K562 (cell line): ENCODE measurements at regions of chr7 and their contacts with region 1.

Region 1: DNA sequence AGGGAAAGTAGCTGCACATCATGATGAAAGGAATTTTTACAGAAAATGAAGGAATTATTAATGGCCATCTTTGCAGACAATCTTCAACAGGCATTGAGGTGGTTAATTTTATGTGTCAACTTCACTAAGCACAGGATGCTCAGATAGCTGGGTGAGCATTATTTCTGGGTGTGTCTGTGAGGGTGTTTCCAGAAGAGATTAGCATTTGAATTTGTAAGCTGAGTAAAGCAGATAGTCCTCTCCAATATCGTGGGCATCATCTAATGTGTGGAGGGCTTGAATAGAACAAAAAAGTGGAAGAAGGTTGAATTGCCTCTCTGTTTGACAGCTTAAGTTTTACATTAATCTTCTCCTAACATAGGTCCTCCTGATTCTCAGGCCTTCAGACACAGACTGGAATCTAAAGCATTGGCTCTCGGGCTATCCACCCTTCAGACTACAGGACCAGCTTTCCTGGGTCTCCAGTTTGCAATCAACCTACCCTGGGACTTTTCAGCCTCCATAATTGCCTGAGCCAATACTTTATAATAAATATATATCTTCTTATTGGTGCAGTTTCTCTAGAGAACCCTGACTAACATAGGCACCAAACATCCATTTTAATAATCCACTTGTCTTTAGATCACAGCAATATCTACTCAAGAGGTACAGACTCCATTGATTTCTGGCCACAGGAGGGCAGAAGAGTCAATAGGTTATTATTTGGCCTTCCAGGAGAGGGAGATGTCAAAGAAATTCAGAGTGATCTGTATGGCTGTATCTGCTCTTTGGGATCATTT is 10.5 kb upstream of the CRPPA start:
- DNase-seq: peak; percentile 36 to 77 (median 50)
- ATAC-seq: peak; percentile 92
- H3K4me3 ChIP-seq: no peak overlapping the region
- H3K27ac ChIP-seq: no peak overlapping the region
- H3K4me1 ChIP-seq: peaks cover 0 to 37% of the 10 kb centered on the region in 2 experiments; a peak in 4 of 5 replicates
- H3K27me3 ChIP-seq: no peaks in the 10 kb centered on the region
- CTCF ChIP-seq: peak; percentile 71 to 96 (median 89)
- EP300 ChIP-seq: no peak; the same call in 1 of the 2 replicates
- POLR2A ChIP-seq: no peak
- RAD21 ChIP-seq: peak; percentile 84 to 92

Region 2: GRCh38 chr7:16078076-16078952 is 353.5 kb before region 1 on chr7:
- CTCF ChIA-PET with region 1: no interaction called
- POLR2A ChIA-PET with region 1: no interaction called
- in situ Hi-C with region 1: no loop called
- intact Hi-C with region 1: loop called (anchors 1 kb)
- DNase-seq: peak; percentile 35 to 83 (median 40)
- ATAC-seq: peak; percentile 94
- H3K4me3 ChIP-seq: no peak overlapping the region
- H3K27ac ChIP-seq: no peak overlapping the region
- H3K4me1 ChIP-seq: no peaks in the 10 kb centered on the region; a peak in 1 of 5 replicates
- H3K27me3 ChIP-seq: no peaks in the 10 kb centered on the region
- CTCF ChIP-seq: peak; percentile 60 to 77 (median 74); a peak in 5 of 6 replicates
- EP300 ChIP-seq: no peak
- POLR2A ChIP-seq: no peak
- RAD21 ChIP-seq: peak; percentile 92 to 95

Region 3: GRCh38 chr7:16114633-16115032 is 317.2 kb before region 1 on chr7:
- CTCF ChIA-PET with region 1: no interaction called
- POLR2A ChIA-PET with region 1: no interaction called
- in situ Hi-C with region 1: no loop called
- intact Hi-C with region 1: loop called (anchors 2 kb)
- DNase-seq: peak in 2 of 4 experiments; percentile 23 to 58
- ATAC-seq: peak; percentile 83
- H3K4me3 ChIP-seq: no peak overlapping the region
- H3K27ac ChIP-seq: no peak overlapping the region; the same call in 2 of the 3 replicates
- H3K4me1 ChIP-seq: no peaks in the 10 kb centered on the region
- H3K27me3 ChIP-seq: no peaks in the 10 kb centered on the region
- CTCF ChIP-seq: peak in 2 of 3 experiments; percentile 42 to 60; a peak in 3 of 6 replicates
- EP300 ChIP-seq: no peak
- POLR2A ChIP-seq: no peak
- RAD21 ChIP-seq: peak; percentile 51 to 78

Region 4: GRCh38 chr7:16420649-16421332 is 11.0 kb before region 1 on chr7:
- CTCF ChIA-PET with region 1: no interaction called
- POLR2A ChIA-PET with region 1: interaction called, 24 read pairs
- in situ Hi-C with region 1: no loop called
- intact Hi-C with region 1: no loop called
- DNase-seq: peak; percentile 85 to 97 (median 90)
- ATAC-seq: peak; percentile 87
- H3K4me3 ChIP-seq: peak overlapping the region; percentile 66
- H3K27ac ChIP-seq: peak overlapping the region; percentile 97
- H3K4me1 ChIP-seq: peaks cover 23 to 46% of the 10 kb centered on the region in 2 experiments
- H3K27me3 ChIP-seq: no peaks in the 10 kb centered on the region
- CTCF ChIP-seq: peak; percentile 29 to 73 (median 36); a peak in 5 of 6 replicates
- EP300 ChIP-seq: no peak
- POLR2A ChIP-seq: peak; percentile 96
- RAD21 ChIP-seq: peak; percentile 30 to 32; a peak in 3 of 4 replicates

Region 5: DNA sequence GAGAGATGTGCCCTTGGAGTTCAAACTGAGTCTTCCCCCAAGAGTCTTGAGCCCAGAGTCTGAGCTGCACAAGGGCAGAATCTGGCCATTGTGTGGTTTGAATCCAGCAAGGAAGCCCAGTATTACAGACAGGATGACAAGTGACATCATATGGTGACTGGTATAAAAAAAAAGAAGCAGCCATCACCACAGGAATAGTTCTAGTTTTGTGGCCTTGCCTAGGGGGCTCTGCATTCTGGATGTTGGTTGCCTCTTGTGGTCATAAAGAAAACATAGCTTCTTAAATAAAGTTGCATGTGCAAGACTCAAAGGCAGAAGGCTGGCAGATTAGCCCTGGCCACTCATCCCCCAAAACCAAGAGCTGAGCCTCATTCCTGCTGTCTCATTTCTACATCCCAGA is 78.0 kb after region 1 on chr7:
- CTCF ChIA-PET with region 1: no interaction called
- POLR2A ChIA-PET with region 1: interaction called, 4 read pairs
- in situ Hi-C with region 1: no loop called
- intact Hi-C with region 1: loop called (anchors 5 kb)
- DNase-seq: peak in 1 of 4 experiments; percentile 39
- ATAC-seq: peak; percentile 79
- H3K4me3 ChIP-seq: no peak overlapping the region
- H3K27ac ChIP-seq: no peak overlapping the region
- H3K4me1 ChIP-seq: peaks cover 3 to 6% of the 10 kb centered on the region in 2 experiments; a peak in 2 of 5 replicates
- H3K27me3 ChIP-seq: no peaks in the 10 kb centered on the region
- CTCF ChIP-seq: peak; percentile 32 to 46 (median 41); a peak in 4 of 6 replicates
- EP300 ChIP-seq: no peak
- POLR2A ChIP-seq: no peak
- RAD21 ChIP-seq: peak in 1 of 2 experiments; percentile 50; a peak in 2 of 4 replicates

Region 6: GRCh38 chr7:16564909-16565426 is 133.1 kb after region 1 on chr7:
- CTCF ChIA-PET with region 1: interaction called, 20 read pairs
- POLR2A ChIA-PET with region 1: no interaction called
- in situ Hi-C with region 1: no loop called
- intact Hi-C with region 1: loop called (anchors 1 kb)
- DNase-seq: peak; percentile 47 to 71 (median 58)
- ATAC-seq: peak; percentile 84
- H3K4me3 ChIP-seq: no peak overlapping the region
- H3K27ac ChIP-seq: no peak overlapping the region
- H3K4me1 ChIP-seq: no peaks in the 10 kb centered on the region; a peak in 2 of 5 replicates
- H3K27me3 ChIP-seq: no peaks in the 10 kb centered on the region
- CTCF ChIP-seq: peak; percentile 62 to 86 (median 68); a peak in 5 of 6 replicates
- EP300 ChIP-seq: no peak
- POLR2A ChIP-seq: no peak
- RAD21 ChIP-seq: peak; percentile 94 to 98